GM18951 (cell line): ENCODE measurements at regions of chr1 and their contacts with region 1.

Region 1: GRCh38 chr1:46298387-46298786 is 5.0 kb downstream of the LRRC41 start:
- POLR2A ChIP-seq: no peak

Region 2: GRCh38 chr1:46340404-46341221 is 42.2 kb after region 1 on chr1 and contains the start of gene NSUN4:
- in situ Hi-C with region 1: loop called (anchors 5 kb)
- POLR2A ChIP-seq: peak; percentile 80